ENCODE measurements at regions of chr2 and their contacts with region 1.

Region 1: DNA sequence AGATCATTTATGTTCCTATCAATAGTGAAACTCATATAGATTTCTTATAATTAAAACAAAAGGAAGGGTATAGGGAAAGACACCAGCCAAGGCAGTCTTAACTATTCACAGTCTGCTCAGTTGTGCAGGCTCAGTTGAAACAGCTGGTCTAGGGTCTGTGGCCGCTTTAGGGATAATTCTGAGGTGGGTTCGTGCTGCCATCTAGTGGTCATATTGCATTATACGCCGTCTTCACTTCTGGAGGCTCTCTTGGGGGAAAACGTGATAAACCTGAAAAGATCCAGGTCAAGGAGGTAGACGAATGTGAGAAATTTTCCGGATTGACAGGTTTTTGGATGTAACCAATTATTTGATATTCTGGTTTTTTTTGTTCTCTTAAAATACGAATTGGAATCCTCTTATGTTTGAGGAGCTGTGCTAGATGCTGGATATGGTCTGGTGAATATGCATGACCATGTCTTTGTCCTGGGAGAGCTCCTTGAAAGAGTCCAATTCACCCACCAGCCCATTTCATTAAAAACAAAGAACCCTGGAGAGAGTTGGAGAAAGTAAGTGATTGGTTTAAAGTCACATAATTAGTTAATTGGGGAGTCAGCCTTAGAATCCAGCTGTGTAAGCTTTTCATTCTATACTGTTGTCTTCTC is 492.4 kb downstream of the PLCL1 start:
- DNase-seq: peak; percentile 60
- CTCF ChIP-seq: peak; percentile 69

Region 2: DNA sequence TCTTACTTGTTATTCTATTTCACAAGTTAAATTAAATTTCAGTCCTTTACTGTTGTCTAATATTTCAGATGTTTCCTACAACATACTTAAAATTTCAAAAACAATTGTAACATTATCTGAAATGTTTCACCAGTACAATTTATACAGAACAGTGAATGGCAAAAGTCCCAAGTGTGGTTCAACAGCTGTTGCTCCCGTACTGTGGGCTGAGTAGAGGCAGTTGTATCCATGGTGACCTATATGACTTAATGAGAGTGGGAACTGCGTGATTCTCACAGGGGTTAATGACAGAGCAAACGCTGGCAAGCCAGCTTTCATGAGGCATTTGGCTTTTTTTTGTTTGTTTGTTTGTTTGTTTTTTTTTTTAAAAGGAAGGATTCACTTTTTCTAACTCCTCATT is 497.7 kb before region 1 on chr2:
- CTCF ChIA-PET with region 1: interaction called, 19 read pairs
- POLR2A ChIA-PET with region 1: no interaction called
- DNase-seq: no peak
- CTCF ChIP-seq: no peak

Region 3: GRCh38 chr2:198135481-198135934 is 161.3 kb before region 1 on chr2:
- CTCF ChIA-PET with region 1: no interaction called
- POLR2A ChIA-PET with region 1: no interaction called
- DNase-seq: no peak
- CTCF ChIP-seq: no peak

Region 4: DNA sequence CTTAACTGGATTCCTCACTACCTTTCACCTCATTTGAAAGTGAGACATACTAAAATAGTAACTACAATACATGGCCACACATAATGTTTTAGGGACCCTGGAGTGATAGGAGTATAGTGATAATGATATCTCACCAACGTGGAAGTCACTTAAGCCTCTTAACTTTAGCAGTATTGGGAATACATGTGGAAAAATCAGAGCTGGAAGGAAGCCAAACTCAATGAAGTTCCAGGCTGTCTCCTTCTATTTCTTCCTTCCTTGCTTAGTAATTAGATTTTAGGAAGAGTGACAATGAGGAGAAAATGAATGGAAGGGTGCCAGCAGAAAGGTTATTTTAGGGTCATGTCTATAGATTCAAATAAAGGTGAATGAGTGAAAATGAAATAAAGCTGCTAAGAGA is 105.1 kb before region 1 on chr2:
- CTCF ChIA-PET with region 1: no interaction called
- POLR2A ChIA-PET with region 1: no interaction called
- DNase-seq: no peak
- CTCF ChIP-seq: no peak

Region 5: DNA sequence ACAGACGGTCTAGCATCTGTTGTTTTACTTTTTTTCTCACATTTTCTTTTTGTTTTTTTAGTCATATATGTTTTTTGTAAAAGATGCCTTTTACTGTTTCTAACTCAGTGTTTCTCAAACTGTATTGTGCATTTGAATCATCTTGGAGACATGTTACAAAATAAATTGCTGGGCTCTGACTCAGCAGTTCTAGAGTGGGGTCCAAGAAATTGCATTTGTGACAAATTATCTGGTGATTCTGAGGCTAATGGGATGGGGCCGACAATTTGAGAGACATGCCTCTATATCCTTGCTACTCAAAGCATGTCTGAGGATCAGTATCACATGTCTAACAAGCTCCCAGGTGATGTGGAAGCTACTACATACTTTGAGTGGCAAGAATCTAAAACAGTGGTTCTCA is 13.6 kb before region 1 on chr2:
- CTCF ChIA-PET with region 1: interaction called, 13 read pairs
- POLR2A ChIA-PET with region 1: no interaction called
- DNase-seq: no peak
- CTCF ChIP-seq: no peak

Region 6: DNA sequence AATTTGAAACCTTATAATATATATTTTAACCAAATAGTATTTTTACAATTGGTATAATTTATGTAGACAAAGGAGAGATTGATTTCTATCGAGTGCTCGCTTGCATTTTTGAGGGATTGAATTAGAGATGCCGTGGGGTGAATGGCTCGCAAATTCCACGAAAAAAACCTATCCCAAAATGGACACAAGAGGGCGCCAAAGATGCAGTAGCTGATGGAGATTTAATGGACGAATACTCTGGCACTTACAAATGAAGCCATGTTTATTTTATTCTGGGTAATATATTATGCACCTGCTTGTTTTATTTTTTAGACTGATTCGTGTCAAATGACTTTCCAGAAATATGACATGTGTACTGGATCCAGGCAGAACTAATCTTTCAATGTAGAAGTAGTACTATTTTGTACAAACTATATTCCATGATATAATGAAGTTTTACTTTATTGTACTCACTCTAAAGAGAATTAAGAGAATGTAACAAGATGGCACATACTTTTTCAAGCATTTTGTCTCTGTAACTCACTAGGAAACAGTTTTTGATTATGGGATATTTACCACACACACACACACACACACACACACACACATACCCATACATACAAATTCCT is 13.0 kb after region 1 on chr2:
- CTCF ChIA-PET with region 1: interaction called, 23 read pairs
- POLR2A ChIA-PET with region 1: no interaction called
- DNase-seq: peak; percentile 54
- CTCF ChIP-seq: peak; percentile 77

Region 7: DNA sequence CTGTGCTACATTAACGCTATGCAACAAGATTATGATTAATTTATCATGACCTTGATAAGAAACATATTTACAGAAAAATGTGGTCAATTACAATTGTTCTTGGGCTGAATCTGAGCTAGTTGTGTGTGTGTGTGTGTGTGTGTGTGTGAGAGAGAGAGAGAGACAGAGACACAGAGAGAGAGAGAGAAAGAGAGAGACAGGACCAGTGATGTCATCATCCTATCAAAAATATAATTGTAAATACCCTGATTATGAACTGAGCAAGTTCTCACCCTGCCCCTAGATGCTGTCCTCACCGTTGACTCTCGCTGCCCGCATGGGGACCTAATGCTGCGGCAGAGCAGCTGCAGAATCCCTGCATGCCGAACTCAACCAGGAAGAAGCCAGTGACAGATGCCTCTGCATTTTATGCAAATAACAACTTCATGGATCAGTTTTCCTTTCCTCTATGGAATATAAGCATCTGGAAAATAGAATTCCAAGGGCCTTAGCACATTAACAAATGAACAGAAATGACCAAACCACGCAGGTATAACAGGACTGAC is 20.1 kb after region 1 on chr2:
- CTCF ChIA-PET with region 1: interaction called, 16 read pairs
- POLR2A ChIA-PET with region 1: no interaction called
- DNase-seq: no peak
- CTCF ChIP-seq: no peak

Region 8: GRCh38 chr2:198715302-198715835 is 418.6 kb after region 1 on chr2:
- CTCF ChIA-PET with region 1: no interaction called
- POLR2A ChIA-PET with region 1: no interaction called
- DNase-seq: no peak
- CTCF ChIP-seq: no peak